ENCODE measurements at regions of chr3 and their contacts with region 1.

Region 1: GRCh38 chr3:128879125-128879969 is at the start of gene ACAD9:
- DNase-seq: peak; percentile 97
- ATAC-seq: peak; percentile 96
- H3K4me3 ChIP-seq: peak within 1 kb of the TSS; percentile 86 to 97 (median 88)
- H3K4me3 Mint-ChIP-seq: peak within 1 kb of the TSS; percentile 95
- H3K27ac ChIP-seq: peak within 1 kb of the TSS; percentile 93 to 98
- H3K27ac Mint-ChIP-seq: peak within 1 kb of the TSS; percentile 95
- H3K4me1 ChIP-seq: peaks cover 24 to 31% of the 10 kb centered on the region in 2 donors
- H3K4me1 Mint-ChIP-seq: peaks cover 55% of the 10 kb centered on the region
- H3K27me3 ChIP-seq: no peaks in the 10 kb centered on the region
- H3K27me3 Mint-ChIP-seq: no peaks in the 10 kb centered on the region
- CTCF ChIP-seq: no peak
- total RNA-seq, gene ACAD9: 57.6 and 71.8 TPM in 2 replicates

Region 2: GRCh38 chr3:128650096-128651050 is 229.0 kb before region 1 on chr3 and contains the start of gene RPN1:
- CTCF ChIA-PET with region 1: interaction called, 3 read pairs
- POLR2A ChIA-PET with region 1: interaction called, 3 read pairs
- intact Hi-C with region 1: loop called (anchors 1 kb)
- DNase-seq: peak; percentile 96
- ATAC-seq: peak; percentile 97
- H3K4me3 ChIP-seq: peak within 1 kb of the TSS; percentile 74 to 100 (median 90)
- H3K4me3 Mint-ChIP-seq: peak within 1 kb of the TSS; percentile 89
- H3K27ac ChIP-seq: peak within 1 kb of the TSS; percentile 89 to 98
- H3K27ac Mint-ChIP-seq: peak within 1 kb of the TSS; percentile 91
- H3K4me1 ChIP-seq: peaks cover 15 to 25% of the 10 kb centered on the region in 2 donors
- H3K4me1 Mint-ChIP-seq: peaks cover 31% of the 10 kb centered on the region
- H3K27me3 ChIP-seq: no peaks in the 10 kb centered on the region
- H3K27me3 Mint-ChIP-seq: no peaks in the 10 kb centered on the region
- CTCF ChIP-seq: no peak
- total RNA-seq, gene RPN1: 80.6 and 83.2 TPM in 2 replicates

Region 3: DNA sequence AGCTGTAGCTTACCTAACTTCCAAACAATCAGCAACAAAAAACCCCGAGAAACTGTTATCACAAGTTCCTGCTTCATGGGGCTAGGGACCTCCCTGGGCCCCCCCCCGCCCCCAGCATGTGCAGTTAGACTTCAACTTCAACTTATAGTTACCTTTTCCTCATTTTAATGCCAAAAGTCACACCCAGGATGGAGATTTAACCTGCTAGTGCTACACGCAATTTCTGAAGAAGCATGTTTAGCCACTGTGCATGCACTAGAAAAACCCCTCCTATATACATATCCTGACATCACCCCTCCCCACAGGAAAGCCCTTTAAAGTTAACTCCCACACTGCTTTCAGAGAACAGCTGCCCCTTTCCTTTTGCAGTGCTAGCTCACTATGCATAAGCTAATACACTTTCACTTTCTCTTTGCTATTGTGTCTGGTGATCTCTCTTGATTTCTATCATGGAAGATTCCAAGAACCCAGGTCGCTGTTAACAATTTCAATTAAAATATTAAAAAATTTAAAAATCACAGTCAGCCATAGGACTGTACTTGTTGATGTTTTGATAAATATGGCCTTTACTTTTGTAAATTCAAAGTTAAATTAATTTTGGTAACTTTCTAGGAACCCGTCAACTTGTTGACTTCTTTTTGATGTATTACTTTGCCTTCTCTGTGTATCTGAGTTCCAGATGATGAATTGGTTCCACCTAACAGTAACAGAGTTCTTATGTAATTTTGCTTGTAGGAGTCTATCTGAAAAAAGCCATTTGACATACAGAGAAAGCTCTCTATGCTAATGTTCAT is 75.1 kb before region 1 on chr3:
- CTCF ChIA-PET with region 1: no interaction called
- POLR2A ChIA-PET with region 1: interaction called, 6 read pairs
- intact Hi-C with region 1: loop called (anchors 2 kb)
- DNase-seq: peak; percentile 84
- ATAC-seq: peak; percentile 95
- H3K4me3 ChIP-seq: peak overlapping the region; percentile 13 to 55 (median 28)
- H3K4me3 Mint-ChIP-seq: peak overlapping the region; percentile 69
- H3K27ac ChIP-seq: peak overlapping the region; percentile 58 to 89
- H3K27ac Mint-ChIP-seq: peak overlapping the region; percentile 84
- H3K4me1 ChIP-seq: peaks cover 19 to 21% of the 10 kb centered on the region in 2 donors
- H3K4me1 Mint-ChIP-seq: peaks cover 56% of the 10 kb centered on the region
- H3K27me3 ChIP-seq: no peaks in the 10 kb centered on the region
- H3K27me3 Mint-ChIP-seq: no peaks in the 10 kb centered on the region
- CTCF ChIP-seq: no peak

Region 4: DNA sequence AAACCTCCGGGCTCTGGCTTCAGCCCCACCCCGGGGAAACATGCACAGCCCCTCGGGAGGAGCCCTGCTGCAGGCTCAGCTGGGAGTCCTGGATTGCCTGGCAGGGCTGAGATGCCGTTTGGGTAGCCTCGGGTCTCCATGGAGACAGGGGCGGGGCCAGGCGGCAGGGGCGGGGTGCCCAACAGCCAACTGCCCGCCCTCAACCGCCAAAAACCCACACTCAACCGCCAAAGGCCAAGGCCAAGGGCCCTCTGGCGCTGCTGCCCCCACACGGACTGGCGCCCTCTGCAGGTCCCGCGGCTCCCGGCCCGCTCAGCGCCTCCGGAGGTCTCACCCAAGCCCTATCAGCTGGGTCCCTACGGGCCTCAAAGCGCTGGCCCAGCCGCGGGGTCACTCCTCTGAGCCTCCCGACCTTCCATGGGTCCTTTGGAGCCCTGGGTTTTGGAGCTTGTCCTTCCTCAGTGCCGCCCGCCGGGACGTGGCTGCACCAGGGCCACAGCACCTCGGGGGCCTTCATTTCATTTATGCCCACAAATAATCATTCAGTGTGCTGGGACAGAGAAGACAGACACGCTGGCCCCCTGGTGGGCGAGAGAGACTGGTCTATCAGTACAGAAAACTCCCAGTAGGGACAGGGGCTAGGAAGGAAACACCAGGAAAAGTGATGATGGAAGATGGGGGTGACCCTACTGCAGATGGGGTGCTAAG is 33.4 kb before region 1 on chr3:
- CTCF ChIA-PET with region 1: interaction called, 3 read pairs
- POLR2A ChIA-PET with region 1: no interaction called
- intact Hi-C with region 1: loop called (anchors 1 kb)
- DNase-seq: peak; percentile 82
- ATAC-seq: peak; percentile 86
- H3K4me3 ChIP-seq: peak overlapping the region in 4 of 5 experiments; percentile 45 to 70 (median 58)
- H3K4me3 Mint-ChIP-seq: peak overlapping the region; percentile 85
- H3K27ac ChIP-seq: peak overlapping the region in 1 of 2 donors; percentile 52
- H3K27ac Mint-ChIP-seq: peak overlapping the region; percentile 56
- H3K4me1 ChIP-seq: peaks cover 11 to 17% of the 10 kb centered on the region in 2 donors
- H3K4me1 Mint-ChIP-seq: peaks cover 11% of the 10 kb centered on the region
- H3K27me3 ChIP-seq: no peaks in the 10 kb centered on the region
- H3K27me3 Mint-ChIP-seq: no peaks in the 10 kb centered on the region
- CTCF ChIP-seq: peak; percentile 85

Measured in B cell (primary cell).